GM13977 (cell line): ENCODE measurements at regions of chr10 and their contacts with region 1.

Region 1: DNA sequence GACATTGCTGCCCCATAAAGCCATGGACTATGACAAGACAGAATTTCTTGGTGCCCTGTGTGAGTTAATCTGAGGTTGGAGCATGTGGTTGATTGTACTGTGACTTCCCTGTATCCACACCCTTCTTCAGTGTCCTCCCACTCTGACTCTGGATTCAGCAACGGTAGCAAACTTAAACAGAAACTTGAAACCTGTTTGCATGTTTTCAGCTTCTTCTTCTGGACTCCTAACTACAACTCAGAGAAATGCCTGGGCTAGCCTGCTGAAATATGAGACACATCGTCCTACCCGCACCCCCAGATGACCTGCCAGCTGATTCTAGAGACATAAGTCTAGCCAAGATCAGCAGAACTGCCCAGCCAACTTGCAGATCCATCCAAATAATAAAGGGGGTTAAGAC is 78.4 kb downstream of the IPMK start:
- DNase-seq: no peak
- CTCF ChIP-seq: no peak

Region 2: GRCh38 chr10:58282615-58283014 is 93.3 kb after region 1 on chr10:
- in situ Hi-C with region 1: loop called (anchors 10 kb)
- DNase-seq: peak; percentile 46
- CTCF ChIP-seq: no peak